Cardiac septum (tissue), 1 donor: ENCODE measurements at regions of chr18 and their contacts with region 1.

Region 1: DNA sequence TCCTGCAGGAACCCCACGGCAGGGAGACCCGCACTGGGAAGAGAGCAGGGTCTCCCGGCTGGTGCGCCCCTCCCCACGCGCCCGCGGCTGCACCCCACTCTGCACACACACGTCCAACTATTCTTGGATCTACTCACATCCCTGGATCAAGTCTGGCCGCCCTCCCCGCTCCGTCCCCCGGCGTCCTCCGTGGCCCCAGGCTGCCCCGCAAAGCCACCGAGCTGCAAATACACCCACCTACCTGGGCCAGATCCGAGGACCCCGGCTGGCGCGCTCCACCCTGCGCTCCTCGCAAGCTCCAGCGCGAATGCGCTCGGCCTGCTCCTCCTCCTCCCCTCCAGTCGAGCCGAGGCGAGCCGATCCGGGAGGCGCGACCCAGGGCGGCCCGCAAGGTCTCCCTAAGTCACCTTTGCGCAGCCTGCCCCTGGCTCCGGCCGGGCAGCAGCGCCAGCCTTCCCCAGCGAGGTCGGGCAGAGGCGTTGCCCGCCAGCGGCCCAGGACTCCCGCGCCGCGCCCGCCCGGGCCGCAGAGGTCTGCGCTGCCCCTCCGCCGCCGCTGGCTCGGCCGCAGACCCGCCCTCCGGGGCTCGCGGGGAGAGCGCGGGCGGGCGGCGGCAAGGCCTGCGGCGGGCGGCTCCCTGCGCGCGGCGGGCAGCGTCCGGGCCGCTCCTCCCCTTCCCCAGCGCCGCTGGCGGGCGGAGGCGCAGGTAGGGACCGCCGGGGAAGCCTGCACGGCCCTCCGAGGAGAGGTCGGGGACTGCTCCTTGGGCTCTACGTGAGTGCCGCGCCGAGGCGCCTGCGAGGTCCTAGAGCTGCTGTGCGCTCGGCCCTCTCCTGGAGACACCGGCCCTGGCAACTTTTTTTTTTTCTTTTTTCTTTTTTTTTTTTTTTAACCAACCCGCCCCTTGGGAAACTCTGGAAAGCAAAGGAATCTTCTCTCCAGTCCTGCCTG is 126.0 kb downstream of the OSBPL1A start:
- DNase-seq: peak; percentile 88

Region 2: GRCh38 chr18:24176727-24177416 is 94.8 kb before region 1 on chr18:
- intact Hi-C with region 1: loop called (anchors 2 kb)
- DNase-seq: no peak

Region 3: GRCh38 chr18:24231773-24232735 is 39.6 kb before region 1 on chr18:
- intact Hi-C with region 1: loop called (anchors 5 kb)
- DNase-seq: no peak

Region 4: GRCh38 chr18:24342347-24342746 is 70.7 kb after region 1 on chr18:
- intact Hi-C with region 1: no loop called
- DNase-seq: no peak

Region 5: GRCh38 chr18:24413148-24413547 is 141.5 kb after region 1 on chr18:
- intact Hi-C with region 1: no loop called
- DNase-seq: no peak

Region 6: GRCh38 chr18:24584813-24585212 is 313.2 kb after region 1 on chr18:
- intact Hi-C with region 1: no loop called
- DNase-seq: no peak